ENCODE measurements at regions of chr4 and their contacts with region 1.

Region 1: GRCh38 chr4:82525395-82525831 is 36.4 kb downstream of the TMEM150C start:
- DNase-seq: peak; percentile 24 to 44
- H3K4me3 ChIP-seq: no peak overlapping the region
- H3K4me3 Mint-ChIP-seq: no peak overlapping the region
- H3K27ac Mint-ChIP-seq: peak overlapping the region; percentile 19
- H3K4me1 ChIP-seq: peaks cover 24% of the 10 kb centered on the region
- H3K4me1 Mint-ChIP-seq: peaks cover 27% of the 10 kb centered on the region
- H3K27me3 ChIP-seq: no peaks in the 10 kb centered on the region
- H3K27me3 Mint-ChIP-seq: no peaks in the 10 kb centered on the region
- CTCF ChIP-seq: no peak

Region 2: GRCh38 chr4:82050806-82051205 is 474.6 kb before region 1 on chr4:
- CTCF ChIA-PET with region 1: no interaction called
- POLR2A ChIA-PET with region 1: no interaction called
- intact Hi-C with region 1: no loop called
- DNase-seq: no peak
- H3K4me3 ChIP-seq: no peak overlapping the region
- H3K4me3 Mint-ChIP-seq: no peak overlapping the region
- H3K27ac Mint-ChIP-seq: no peak overlapping the region
- H3K4me1 ChIP-seq: no peaks in the 10 kb centered on the region
- H3K4me1 Mint-ChIP-seq: no peaks in the 10 kb centered on the region
- H3K27me3 ChIP-seq: no peaks in the 10 kb centered on the region
- H3K27me3 Mint-ChIP-seq: no peaks in the 10 kb centered on the region
- CTCF ChIP-seq: no peak

Region 3: DNA sequence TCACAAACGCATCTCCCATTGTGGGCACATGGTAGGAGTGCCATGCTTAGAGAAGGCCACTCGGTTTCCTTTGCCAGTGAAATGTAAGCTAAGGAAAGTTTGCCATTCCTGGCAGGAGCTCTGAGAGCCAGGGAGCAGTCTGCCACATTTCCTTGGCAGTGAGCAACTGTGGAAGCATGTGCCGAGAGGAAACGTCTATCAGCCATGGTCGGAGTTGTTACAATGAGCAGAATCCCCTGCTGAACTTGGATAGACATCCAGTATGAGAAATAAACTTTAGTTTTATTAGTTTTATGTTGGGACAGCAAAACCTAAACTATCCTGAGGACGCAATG is 43.9 kb before region 1 on chr4:
- CTCF ChIA-PET with region 1: no interaction called
- POLR2A ChIA-PET with region 1: no interaction called
- intact Hi-C with region 1: loop called (anchors 2 kb)
- DNase-seq: no peak
- H3K4me3 ChIP-seq: no peak overlapping the region
- H3K4me3 Mint-ChIP-seq: no peak overlapping the region
- H3K27ac Mint-ChIP-seq: no peak overlapping the region
- H3K4me1 ChIP-seq: peaks cover 5% of the 10 kb centered on the region
- H3K4me1 Mint-ChIP-seq: peaks cover 6% of the 10 kb centered on the region
- H3K27me3 ChIP-seq: no peaks in the 10 kb centered on the region
- H3K27me3 Mint-ChIP-seq: no peaks in the 10 kb centered on the region
- CTCF ChIP-seq: no peak

Region 4: DNA sequence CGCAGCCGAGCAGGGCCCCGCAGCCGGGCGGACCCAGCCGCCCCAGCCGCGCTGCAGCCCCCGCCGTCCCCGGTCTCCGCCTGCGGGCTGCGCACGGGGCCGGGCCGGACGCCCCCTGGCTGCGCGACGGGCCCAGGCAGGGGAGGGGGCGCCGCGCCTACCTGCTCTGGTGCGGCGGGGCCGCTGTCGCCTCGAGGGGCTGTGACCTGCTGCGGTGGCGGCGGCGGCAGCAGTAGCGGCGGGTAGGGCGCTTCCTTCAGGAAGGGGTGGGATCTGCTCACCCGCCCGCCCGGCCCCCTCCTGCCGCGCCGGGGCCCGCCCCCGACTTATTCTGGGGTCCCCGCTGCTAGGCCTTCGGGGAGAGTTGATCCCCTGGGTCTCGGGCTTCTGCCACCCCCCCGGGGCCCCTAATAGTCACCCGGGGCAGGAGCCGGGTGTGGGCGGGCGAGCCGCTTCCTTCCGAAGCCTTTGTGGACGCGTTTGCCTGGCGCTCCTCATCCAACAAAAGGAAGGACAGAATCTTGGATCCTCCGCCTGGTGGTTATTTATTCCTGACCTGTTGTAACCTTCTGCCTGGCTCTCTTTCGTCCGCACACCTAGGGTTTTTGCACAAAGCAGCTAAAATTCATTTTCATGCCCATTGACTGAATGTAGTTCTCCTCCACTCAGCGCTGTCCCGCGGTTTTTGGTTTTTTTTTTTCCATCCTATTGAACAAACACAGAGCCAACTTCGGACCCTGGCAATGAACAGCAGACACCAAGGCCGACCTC is 36.5 kb after region 1 on chr4 and contains the start of gene TMEM150C:
- CTCF ChIA-PET with region 1: no interaction called
- POLR2A ChIA-PET with region 1: no interaction called
- intact Hi-C with region 1: loop called (anchors 5 kb)
- DNase-seq: peak; percentile 43 to 69
- H3K4me3 ChIP-seq: peak within 1 kb of the TSS; percentile 56
- H3K4me3 Mint-ChIP-seq: peak within 1 kb of the TSS; percentile 81
- H3K27ac Mint-ChIP-seq: peak within 1 kb of the TSS; percentile 48
- H3K4me1 ChIP-seq: no peaks in the 10 kb centered on the region
- H3K4me1 Mint-ChIP-seq: peaks cover 12% of the 10 kb centered on the region
- H3K27me3 ChIP-seq: no peaks in the 10 kb centered on the region
- H3K27me3 Mint-ChIP-seq: no peaks in the 10 kb centered on the region
- CTCF ChIP-seq: no peak
- total RNA-seq, gene TMEM150C: 5.0 and 5.7 TPM in 2 replicates

Region 5: DNA sequence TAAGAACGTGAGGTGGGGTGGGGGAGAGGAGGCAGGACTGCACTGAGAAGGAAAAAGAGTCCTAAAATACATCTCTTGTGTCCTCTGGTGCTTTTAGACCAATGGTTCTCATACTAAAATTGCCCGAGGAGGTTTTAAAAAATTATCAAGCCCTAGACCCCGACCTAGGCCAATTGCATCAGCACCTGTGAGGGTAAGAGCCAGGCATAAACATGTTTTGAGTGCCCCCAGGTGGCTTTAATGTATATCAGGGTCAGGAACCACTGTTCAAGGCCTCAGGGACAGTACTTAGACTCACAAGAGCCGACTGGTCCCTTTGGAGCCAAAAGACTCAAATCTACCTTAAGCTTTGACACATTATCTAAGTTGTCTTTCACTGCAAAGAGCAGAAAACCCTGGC is 73.9 kb after region 1 on chr4:
- CTCF ChIA-PET with region 1: no interaction called
- POLR2A ChIA-PET with region 1: no interaction called
- intact Hi-C with region 1: loop called (anchors 2 kb)
- DNase-seq: peak; percentile 55 to 57
- H3K4me3 ChIP-seq: no peak overlapping the region
- H3K4me3 Mint-ChIP-seq: no peak overlapping the region
- H3K27ac Mint-ChIP-seq: no peak overlapping the region
- H3K4me1 ChIP-seq: no peaks in the 10 kb centered on the region
- H3K4me1 Mint-ChIP-seq: no peaks in the 10 kb centered on the region
- H3K27me3 ChIP-seq: no peaks in the 10 kb centered on the region
- H3K27me3 Mint-ChIP-seq: no peaks in the 10 kb centered on the region
- CTCF ChIP-seq: peak in 1 of 2 experiments; percentile 30

Measured in Caco-2 (cell line).